Heart right ventricle (tissue), 16 donors: ENCODE measurements at regions of chrX and their contacts with region 1.

Region 1: GRCh38 chrX:68504237-68504636 is 5.4 kb downstream of the YIPF6 start:
- DNase-seq: no peak
- ATAC-seq: no peak
- H3K4me3 ChIP-seq: no peak overlapping the region
- H3K27ac ChIP-seq: no peak overlapping the region
- H3K4me1 ChIP-seq: peaks cover 0 to 57% (median 26%) of the 10 kb centered on the region in 9 donors
- H3K27me3 ChIP-seq: peaks cover 0 to 15% (median 0%) of the 10 kb centered on the region in 7 donors
- CTCF ChIP-seq: no peak

Region 2: GRCh38 chrX:68699960-68700746 is 195.9 kb after region 1 on chrX:
- intact Hi-C with region 1: loop called in 2 of 10 experiments (anchors 10 kb)
- DNase-seq: no peak
- ATAC-seq: peak in 4 of 8 donors; percentile 16 to 34 (median 25)
- H3K4me3 ChIP-seq: peak overlapping the region in 1 of 10 donors; percentile 7
- H3K27ac ChIP-seq: peak overlapping the region in 7 of 10 donors; percentile 29 to 94 (median 89)
- H3K4me1 ChIP-seq: peaks cover 0 to 78% (median 48%) of the 10 kb centered on the region in 9 donors
- H3K27me3 ChIP-seq: peaks cover 0 to 16% (median 0%) of the 10 kb centered on the region in 7 donors
- CTCF ChIP-seq: no peak

Region 3: GRCh38 chrX:68983004-68983857 is 479.0 kb after region 1 on chrX:
- intact Hi-C with region 1: no loop called
- DNase-seq: no peak
- ATAC-seq: peak; percentile 31 to 92 (median 69)
- H3K4me3 ChIP-seq: no peak overlapping the region
- H3K27ac ChIP-seq: no peak overlapping the region
- H3K4me1 ChIP-seq: peaks cover 0 to 15% (median 0%) of the 10 kb centered on the region in 9 donors
- H3K27me3 ChIP-seq: peaks cover 0 to 5% (median 0%) of the 10 kb centered on the region in 7 donors
- CTCF ChIP-seq: no peak